HEK293 (cell line): ENCODE measurements at regions of chr1 and their contacts with region 1.

Region 1: GRCh38 chr1:226121587-226122400 is 59.3 kb downstream of the H3-3A start:
- H3K4me3 ChIP-seq: peak overlapping the region; percentile 48
- H3K27ac ChIP-seq: peak overlapping the region; percentile 97
- H3K4me1 ChIP-seq: peaks cover 5% of the 10 kb centered on the region
- CTCF ChIP-seq: peak; percentile 98

Region 2: DNA sequence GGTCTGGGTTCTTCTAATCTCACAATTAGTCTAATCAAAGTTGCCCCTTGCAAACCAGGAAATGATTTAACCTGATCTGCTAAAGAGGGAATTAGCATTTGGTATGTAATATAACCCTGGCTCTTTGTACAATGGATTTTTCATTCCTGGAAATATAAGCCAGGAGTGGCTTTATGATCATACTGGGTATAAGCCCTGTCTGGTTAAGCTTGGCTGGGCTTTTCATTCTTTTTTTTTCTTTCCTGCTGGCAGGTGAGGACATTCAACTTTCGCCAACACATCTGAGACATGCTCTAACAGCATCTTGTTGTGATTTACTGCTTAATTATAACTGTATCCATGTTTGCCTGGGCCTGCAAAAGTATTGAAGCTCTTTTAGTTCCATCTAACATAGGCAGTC is 102.2 kb before region 1 on chr1:
- CTCF ChIA-PET with region 1: no interaction called
- POLR2A ChIA-PET with region 1: no interaction called
- H3K4me3 ChIP-seq: no peak overlapping the region
- H3K27ac ChIP-seq: no peak overlapping the region
- H3K4me1 ChIP-seq: no peaks in the 10 kb centered on the region
- CTCF ChIP-seq: no peak

Region 3: DNA sequence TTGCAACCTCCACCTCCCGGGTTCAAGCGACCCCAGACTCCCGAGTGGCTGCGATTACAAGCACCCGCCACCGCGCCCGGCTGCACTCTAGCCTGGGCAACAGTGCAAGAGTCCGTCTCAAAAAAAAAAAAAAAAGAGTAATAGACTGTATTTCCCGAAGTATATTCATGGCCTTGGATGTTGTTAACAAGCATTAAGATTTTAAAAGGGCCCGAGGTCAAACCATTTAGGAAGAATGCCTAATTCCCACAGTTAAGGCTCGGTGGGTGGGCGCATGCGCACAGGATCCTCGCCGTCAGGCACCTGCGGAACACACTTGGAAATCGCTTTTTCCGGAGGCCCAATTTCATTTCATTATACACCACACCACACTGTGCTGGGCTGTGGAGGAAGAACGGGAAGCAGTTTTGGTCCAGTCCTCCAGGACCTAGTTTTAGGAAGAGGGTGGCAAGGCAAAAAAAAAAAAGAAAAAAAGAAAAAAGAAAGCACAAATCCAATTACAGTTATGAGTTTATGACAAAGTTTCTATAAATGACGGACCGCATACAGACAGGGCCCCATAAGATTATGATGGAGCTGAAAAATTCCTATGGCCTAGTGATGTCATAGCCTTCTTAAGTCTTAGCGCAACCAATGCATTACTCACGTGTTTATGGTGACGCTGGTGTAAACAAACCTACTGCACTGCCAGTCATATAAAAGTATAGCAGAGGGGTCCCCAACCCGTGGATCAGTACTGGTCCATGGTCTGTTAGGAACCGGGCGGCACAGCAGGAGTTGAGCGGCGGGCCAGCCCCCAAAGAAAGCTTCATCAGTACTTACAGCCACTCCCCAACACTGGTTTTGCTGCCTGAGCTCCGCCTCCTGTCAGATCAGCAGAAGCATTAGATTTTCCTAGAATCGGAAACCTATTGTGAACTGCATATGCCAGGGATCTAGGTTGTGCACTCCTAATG is 21.1 kb before region 1 on chr1:
- CTCF ChIA-PET with region 1: interaction called, 14 read pairs
- POLR2A ChIA-PET with region 1: interaction called, 4 read pairs
- H3K4me3 ChIP-seq: no peak overlapping the region
- H3K27ac ChIP-seq: no peak overlapping the region
- H3K4me1 ChIP-seq: no peaks in the 10 kb centered on the region
- CTCF ChIP-seq: no peak; the same call in 1 of the 2 replicates

Region 4: DNA sequence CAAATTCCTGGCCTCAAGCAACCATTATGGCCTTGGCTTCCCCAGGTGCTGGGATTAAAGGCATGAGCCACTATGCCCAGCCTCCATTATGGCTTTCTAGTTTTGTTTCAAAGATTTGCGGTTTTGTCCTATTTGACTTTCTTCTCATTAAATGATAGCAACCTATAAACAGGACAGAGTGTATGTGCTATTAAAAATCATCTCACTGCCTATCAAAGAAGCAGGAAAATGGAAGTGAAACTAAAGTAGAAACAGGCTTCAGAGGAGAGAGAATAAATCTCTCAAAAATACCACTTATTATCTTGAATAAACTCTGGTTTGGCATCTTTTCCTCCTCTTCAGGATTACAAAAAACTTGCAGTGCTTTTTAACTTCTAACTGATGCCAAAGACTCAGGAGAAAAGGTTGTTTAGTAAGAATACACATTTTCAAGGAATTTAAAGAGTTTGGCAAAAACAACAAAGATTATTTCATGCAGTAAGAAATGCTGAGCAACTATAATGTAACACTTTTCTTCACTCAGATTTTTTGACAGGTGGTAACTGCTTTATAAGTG is 36.0 kb after region 1 on chr1:
- CTCF ChIA-PET with region 1: interaction called, 11 read pairs
- POLR2A ChIA-PET with region 1: no interaction called
- H3K4me3 ChIP-seq: no peak overlapping the region
- H3K27ac ChIP-seq: no peak overlapping the region
- H3K4me1 ChIP-seq: no peaks in the 10 kb centered on the region
- CTCF ChIP-seq: no peak

Region 5: GRCh38 chr1:226209307-226210059 is 87.7 kb after region 1 on chr1:
- CTCF ChIA-PET with region 1: interaction called, 17 read pairs
- POLR2A ChIA-PET with region 1: interaction called, 3 read pairs
- H3K4me3 ChIP-seq: no peak overlapping the region
- H3K27ac ChIP-seq: no peak overlapping the region
- H3K4me1 ChIP-seq: no peaks in the 10 kb centered on the region
- CTCF ChIP-seq: no peak

Region 6: GRCh38 chr1:226332947-226333346 is 211.2 kb after region 1 on chr1:
- CTCF ChIA-PET with region 1: interaction called, 92 read pairs
- POLR2A ChIA-PET with region 1: interaction called, 4 read pairs
- H3K4me3 ChIP-seq: peak overlapping the region; percentile 25; the same call in 1 of the 2 replicates
- H3K27ac ChIP-seq: no peak overlapping the region
- H3K4me1 ChIP-seq: peaks cover 3% of the 10 kb centered on the region; the same call in 1 of the 2 replicates
- CTCF ChIP-seq: no peak

Region 7: DNA sequence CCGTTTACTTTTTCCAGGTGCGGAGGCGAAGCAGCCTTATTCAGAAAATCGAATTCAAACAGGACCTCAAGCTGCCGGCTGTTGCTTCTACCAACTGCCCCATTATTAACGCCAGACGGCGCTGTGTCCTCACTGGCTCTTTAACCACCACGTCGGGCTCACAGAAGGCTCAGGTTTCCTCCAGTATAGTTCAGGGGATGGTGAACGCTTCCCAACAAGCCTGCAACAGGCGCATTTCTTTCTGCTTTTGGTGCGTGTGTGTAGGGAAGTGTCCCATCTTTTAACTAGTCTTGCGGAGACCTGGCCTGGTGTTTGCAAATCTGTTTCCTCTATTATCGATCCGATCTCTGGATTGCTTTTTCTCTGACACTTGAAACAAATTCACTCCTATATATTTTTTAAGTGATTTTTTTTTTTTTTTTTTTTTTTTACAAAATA is 426.0 kb after region 1 on chr1:
- CTCF ChIA-PET with region 1: interaction called, 10 read pairs
- POLR2A ChIA-PET with region 1: no interaction called
- H3K4me3 ChIP-seq: no peak overlapping the region
- H3K27ac ChIP-seq: no peak overlapping the region
- H3K4me1 ChIP-seq: peaks cover 27% of the 10 kb centered on the region
- CTCF ChIP-seq: peak; percentile 97